AG04449 (cell line): ENCODE measurements at regions of chr22 and their contacts with region 1.

Region 1: GRCh38 chr22:50250555-50251476 is at the start of gene HDAC10:
- DNase-seq: no peak
- H3K4me3 ChIP-seq: peak within 1 kb of the TSS; percentile 85
- CTCF ChIP-seq: no peak

Region 2: GRCh38 chr22:50260801-50261614 is 10.2 kb after region 1 on chr22:
- CTCF ChIA-PET with region 1: interaction called, 11 read pairs
- POLR2A ChIA-PET with region 1: interaction called, 16 read pairs
- DNase-seq: no peak
- H3K4me3 ChIP-seq: peak overlapping the region; percentile 70
- CTCF ChIP-seq: no peak

Region 3: GRCh38 chr22:50306753-50307749 is 56.2 kb after region 1 on chr22 and contains the start of gene PLXNB2:
- CTCF ChIA-PET with region 1: interaction called, 11 read pairs
- POLR2A ChIA-PET with region 1: interaction called, 3 read pairs
- DNase-seq: no peak
- H3K4me3 ChIP-seq: peak within 1 kb of the TSS; percentile 89
- CTCF ChIP-seq: no peak

Region 4: DNA sequence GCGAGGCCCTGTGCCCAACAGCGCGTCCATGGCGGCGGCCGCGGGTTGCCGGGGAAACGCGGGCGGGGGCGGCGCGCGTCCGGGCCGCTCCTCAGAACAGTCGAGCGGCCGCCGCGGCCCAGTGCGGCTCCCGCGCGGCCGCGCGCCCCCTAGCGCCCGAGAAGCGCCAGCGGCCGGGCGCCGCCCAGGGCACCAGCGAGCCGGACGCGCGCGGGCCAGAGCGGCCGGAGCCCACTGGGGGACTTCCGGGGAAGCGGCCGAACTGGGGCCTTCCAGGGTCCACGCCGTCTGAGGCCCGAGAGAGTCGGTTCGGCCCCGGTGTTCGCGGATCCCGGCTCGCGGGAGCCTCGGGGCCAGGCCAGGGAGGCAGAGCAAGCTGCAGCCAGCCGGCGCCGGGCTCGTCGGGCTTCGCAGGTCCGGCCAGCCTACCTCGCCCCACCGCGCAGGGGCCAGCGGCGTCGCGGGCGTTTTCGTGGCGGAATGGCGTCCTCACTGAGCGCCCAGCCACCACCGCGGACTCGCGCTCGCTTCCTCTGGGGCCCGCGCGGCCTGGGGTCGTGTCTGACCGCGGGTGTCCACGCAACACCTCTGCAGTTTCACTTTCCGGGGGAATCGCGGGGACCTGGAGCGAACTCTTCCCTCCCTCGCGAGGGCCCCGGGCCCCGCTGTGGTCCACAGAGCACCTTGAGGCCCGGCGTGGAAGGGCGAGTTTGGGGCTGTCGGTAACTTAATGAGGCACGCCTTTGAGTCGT is 76.3 kb after region 1 on chr22 and contains the start of gene DENND6B:
- CTCF ChIA-PET with region 1: interaction called, 81 read pairs
- POLR2A ChIA-PET with region 1: interaction called, 3 read pairs
- DNase-seq: no peak
- H3K4me3 ChIP-seq: peak within 1 kb of the TSS; percentile 66
- CTCF ChIP-seq: peak; percentile 15

Region 5: DNA sequence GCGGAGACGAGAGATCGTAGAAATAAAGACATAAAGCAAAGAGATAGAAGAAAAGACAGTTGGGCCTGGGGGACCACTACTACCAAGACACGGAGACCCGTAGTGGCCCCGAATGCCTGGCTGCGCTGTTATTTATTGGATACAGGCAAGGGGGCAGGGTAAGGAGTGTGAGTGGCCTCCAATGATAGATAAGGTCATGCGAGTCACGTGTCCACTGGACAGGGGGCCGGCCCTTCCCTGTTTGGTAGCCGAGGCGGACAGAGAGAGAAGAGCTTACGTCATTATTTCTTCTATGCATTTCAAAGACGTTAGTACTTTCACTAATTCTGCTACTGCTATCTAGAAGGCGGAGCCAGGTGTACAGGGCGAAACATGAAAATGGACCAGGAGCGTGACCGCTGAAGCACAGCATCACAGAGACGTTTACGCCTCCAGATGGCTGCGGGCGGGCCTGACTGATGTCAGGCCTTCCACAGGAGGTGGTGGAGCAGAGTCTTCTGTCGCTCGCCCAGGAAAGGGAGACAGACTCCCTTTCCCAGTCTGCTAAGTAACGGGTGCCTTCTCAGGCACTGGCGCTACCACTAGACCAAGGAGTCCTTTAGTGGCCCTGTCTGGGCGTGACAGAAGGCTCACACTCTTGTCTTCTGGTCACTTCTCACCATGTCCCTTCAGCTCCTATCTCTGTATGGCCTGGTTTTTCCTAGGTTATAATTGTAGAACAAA is 117.1 kb after region 1 on chr22:
- CTCF ChIA-PET with region 1: interaction called, 38 read pairs
- POLR2A ChIA-PET with region 1: no interaction called
- DNase-seq: no peak
- H3K4me3 ChIP-seq: no peak overlapping the region
- CTCF ChIP-seq: no peak

Region 6: DNA sequence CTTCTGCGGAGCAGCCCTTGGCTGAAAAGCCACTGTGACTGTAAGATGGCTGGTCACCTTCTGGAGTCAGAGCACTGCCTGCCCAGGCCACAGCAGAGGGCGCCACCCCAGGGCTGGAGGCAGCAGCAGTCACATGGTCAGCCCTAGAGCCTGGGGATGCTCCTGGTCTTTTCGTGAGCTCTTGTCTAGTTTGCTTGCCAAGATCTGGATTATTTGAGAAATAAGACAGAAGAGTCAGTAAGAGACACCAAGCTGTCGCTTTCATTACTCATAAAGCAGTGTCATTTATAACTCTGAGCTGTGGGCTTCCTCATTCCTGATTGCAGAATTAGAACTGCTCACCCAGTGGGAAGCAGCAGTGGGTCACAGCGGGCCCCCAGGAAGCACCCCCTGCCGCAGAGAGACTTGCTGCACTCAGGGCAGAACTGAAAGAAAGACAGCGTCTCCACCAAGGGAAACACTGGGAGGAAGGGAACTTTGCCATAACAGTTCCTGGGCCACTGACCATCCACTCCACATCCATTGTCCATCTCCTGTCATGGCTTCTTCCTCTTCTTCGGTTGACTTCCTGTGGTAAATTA is 149.0 kb after region 1 on chr22:
- CTCF ChIA-PET with region 1: interaction called, 12 read pairs
- POLR2A ChIA-PET with region 1: no interaction called
- DNase-seq: no peak
- H3K4me3 ChIP-seq: no peak overlapping the region
- CTCF ChIP-seq: peak; percentile 55